ENCODE measurements at regions of chr2 and their contacts with region 1.

Region 1: GRCh38 chr2:178804791-178805190 is 2.4 kb downstream of the TTN start:
- DNase-seq: peak; percentile 59 to 65
- ATAC-seq: peak; percentile 23 to 28
- H3K4me3 ChIP-seq: peak overlapping the region; percentile 57 to 88 (median 74)
- H3K27ac ChIP-seq: peak overlapping the region; percentile 79 to 99 (median 98)
- H3K4me1 ChIP-seq: peaks cover 47 to 50% of the 10 kb centered on the region in 2 donors
- H3K27me3 ChIP-seq: no peaks in the 10 kb centered on the region
- CTCF ChIP-seq: peak; percentile 65 to 93 (median 86)
- POLR2A ChIP-seq: peak in 1 of 2 donors; percentile 45

Region 2: GRCh38 chr2:178731300-178731699 is 73.5 kb before region 1 on chr2:
- in situ Hi-C with region 1: no loop called
- intact Hi-C with region 1: loop called (anchors 5 kb)
- DNase-seq: peak in 1 of 2 donors; percentile 64
- ATAC-seq: peak; percentile 37 to 51
- H3K4me3 ChIP-seq: no peak overlapping the region
- H3K27ac ChIP-seq: peak overlapping the region; percentile 61 to 79 (median 70)
- H3K4me1 ChIP-seq: peaks cover 69 to 77% of the 10 kb centered on the region in 2 donors
- H3K27me3 ChIP-seq: no peaks in the 10 kb centered on the region
- CTCF ChIP-seq: no peak
- POLR2A ChIP-seq: no peak

Region 3: GRCh38 chr2:178756843-178757242 is 47.9 kb before region 1 on chr2:
- in situ Hi-C with region 1: no loop called
- intact Hi-C with region 1: loop called (anchors 5 kb)
- DNase-seq: no peak
- ATAC-seq: peak; percentile 70 to 75
- H3K4me3 ChIP-seq: no peak overlapping the region
- H3K27ac ChIP-seq: no peak overlapping the region
- H3K4me1 ChIP-seq: peaks cover 55% of the 10 kb centered on the region in 2 donors
- H3K27me3 ChIP-seq: no peaks in the 10 kb centered on the region
- CTCF ChIP-seq: no peak
- POLR2A ChIP-seq: no peak

Region 4: DNA sequence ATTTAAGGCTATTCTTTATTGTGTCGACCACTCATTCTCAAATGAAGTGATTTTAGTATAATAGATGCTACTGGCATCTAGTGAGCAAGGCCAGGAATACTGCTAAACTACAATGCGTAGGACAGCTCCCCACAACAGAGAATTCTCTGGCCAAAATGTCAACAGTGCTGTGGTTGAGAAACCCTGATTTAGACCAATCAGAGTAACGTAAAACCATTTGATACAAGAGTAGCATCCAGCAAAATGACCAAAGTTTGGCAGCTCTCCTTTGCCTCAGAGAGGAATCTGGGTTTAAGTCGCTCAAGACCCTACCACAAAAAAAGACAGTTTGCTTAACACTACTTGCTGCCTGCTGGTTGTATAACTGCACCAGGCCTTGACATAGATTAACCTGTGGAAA is 39.5 kb after region 1 on chr2:
- in situ Hi-C with region 1: no loop called
- intact Hi-C with region 1: no loop called
- DNase-seq: no peak
- ATAC-seq: peak; percentile 64 to 87
- H3K4me3 ChIP-seq: peak overlapping the region in 2 of 4 donors; percentile 1 to 14
- H3K27ac ChIP-seq: peak overlapping the region; percentile 62 to 84 (median 78)
- H3K4me1 ChIP-seq: peaks cover 33 to 35% of the 10 kb centered on the region in 2 donors
- H3K27me3 ChIP-seq: no peaks in the 10 kb centered on the region
- CTCF ChIP-seq: no peak
- POLR2A ChIP-seq: no peak

Region 5: DNA sequence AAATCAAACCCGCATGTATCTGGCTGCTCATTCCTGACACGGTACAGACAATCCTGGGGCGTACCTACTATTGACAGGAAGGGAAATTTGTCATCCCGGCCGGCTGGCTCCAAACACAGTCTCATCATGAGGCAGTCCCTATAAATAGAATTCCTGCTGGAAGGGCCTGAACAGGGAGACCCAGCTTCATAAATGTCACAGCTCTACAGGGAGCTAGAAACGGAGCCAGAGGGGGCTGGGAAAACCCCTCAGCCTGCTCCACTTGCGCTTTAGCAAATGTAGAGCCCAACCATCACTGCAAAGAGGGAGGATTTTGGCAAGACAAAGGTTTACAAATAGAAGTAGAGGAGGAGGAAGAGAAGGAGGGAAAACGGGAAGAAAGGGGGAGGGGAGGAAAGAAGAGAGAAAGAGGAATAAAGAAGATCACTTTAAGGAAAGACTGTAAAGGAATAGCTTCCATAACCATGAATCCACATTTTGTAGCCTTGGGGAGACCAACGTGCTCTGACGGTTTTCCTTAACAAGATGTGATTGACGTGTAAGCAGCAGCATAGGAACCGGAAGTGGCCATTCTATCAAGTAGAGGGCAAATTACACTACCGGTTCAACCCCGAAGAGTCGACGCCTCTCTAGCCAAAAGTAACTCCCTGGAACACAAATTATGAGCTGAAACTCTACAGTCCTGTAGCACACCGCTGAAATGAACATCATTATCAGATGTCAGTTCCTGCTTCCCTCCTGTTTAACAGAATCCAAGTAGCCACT is 59.2 kb after region 1 on chr2:
- in situ Hi-C with region 1: loop called in 1 of 4 experiments (anchors 5 kb)
- intact Hi-C with region 1: loop called (anchors 1 kb)
- DNase-seq: peak; percentile 86 to 92
- ATAC-seq: peak; percentile 79 to 83
- H3K4me3 ChIP-seq: peak overlapping the region; percentile 20 to 58 (median 50)
- H3K27ac ChIP-seq: peak overlapping the region; percentile 96 to 99 (median 98)
- H3K4me1 ChIP-seq: peaks cover 66 to 67% of the 10 kb centered on the region in 2 donors
- H3K27me3 ChIP-seq: no peaks in the 10 kb centered on the region
- CTCF ChIP-seq: no peak
- POLR2A ChIP-seq: peak; percentile 40 to 41

Region 6: GRCh38 chr2:178881075-178881474 is 76.3 kb after region 1 on chr2:
- in situ Hi-C with region 1: no loop called
- intact Hi-C with region 1: no loop called
- DNase-seq: no peak
- ATAC-seq: no peak
- H3K4me3 ChIP-seq: no peak overlapping the region
- H3K27ac ChIP-seq: no peak overlapping the region
- H3K4me1 ChIP-seq: peaks cover 26 to 46% of the 10 kb centered on the region in 2 donors
- H3K27me3 ChIP-seq: no peaks in the 10 kb centered on the region
- CTCF ChIP-seq: no peak
- POLR2A ChIP-seq: no peak

Region 7: GRCh38 chr2:178891265-178891958 is 86.6 kb after region 1 on chr2:
- in situ Hi-C with region 1: no loop called
- intact Hi-C with region 1: loop called (anchors 2 kb)
- DNase-seq: peak; percentile 74 to 89
- ATAC-seq: peak; percentile 95 to 96
- H3K4me3 ChIP-seq: peak overlapping the region in 1 of 4 donors; percentile 1
- H3K27ac ChIP-seq: peak overlapping the region; percentile 55 to 84 (median 80)
- H3K4me1 ChIP-seq: peaks cover 65 to 75% of the 10 kb centered on the region in 2 donors
- H3K27me3 ChIP-seq: no peaks in the 10 kb centered on the region
- CTCF ChIP-seq: peak; percentile 89 to 99 (median 96)
- POLR2A ChIP-seq: no peak